Heart right ventricle (tissue), 16 donors: ENCODE measurements at regions of chr12 and their contacts with region 1.

Region 1: DNA sequence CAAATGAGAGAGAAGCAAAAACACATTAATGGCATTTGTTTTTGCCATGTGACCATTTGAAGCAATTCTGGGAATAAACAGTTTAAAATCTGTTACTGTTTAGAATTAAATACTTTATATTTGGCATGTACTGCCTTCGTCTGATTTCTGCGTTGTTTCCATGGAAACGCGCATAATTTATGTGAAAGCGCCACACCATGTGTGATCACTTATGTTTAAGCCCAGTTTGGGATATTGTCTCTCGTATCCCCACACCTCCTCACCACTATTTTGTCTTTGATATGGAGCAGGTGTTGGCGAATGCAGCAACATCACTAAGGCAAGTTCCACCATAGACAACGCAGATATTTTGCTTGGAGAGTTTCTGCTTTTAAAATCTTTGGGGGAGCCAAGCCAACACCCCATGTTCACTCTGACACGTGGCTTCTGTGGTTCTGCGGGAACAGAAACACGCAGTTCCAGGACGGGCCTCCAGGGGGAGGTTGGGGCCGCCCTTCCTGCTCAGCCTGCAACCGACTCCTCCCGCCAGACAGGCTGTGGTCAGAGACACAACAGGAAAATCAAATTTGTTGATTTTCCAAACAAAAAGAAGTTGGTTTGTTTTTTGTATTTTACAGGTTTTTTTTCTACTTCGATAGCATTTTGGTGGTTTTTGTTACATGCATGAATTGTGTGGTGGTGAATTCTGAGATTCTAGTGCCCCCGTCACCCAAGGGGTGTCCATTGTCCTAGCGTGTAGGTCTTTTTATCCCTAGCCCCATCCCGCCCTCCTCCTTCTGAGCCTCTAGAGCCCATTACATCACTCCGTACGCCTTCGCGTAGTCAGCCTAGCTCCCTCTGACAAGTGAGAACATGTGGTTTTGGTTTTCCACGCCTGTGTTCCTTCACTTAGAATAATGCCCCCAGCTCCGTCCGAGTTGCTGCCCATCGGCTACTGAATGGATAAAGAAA is 101.9 kb upstream of the SFSWAP start:
- DNase-seq: peak; percentile 71 to 75
- ATAC-seq: peak; percentile 71 to 93 (median 88)
- H3K4me3 ChIP-seq: peak overlapping the region in 3 of 10 donors; percentile 2 to 13 (median 10)
- H3K27ac ChIP-seq: no peak overlapping the region
- H3K4me1 ChIP-seq: peaks cover 0 to 45% (median 0%) of the 10 kb centered on the region in 9 donors
- H3K27me3 ChIP-seq: peaks cover 0 to 53% (median 14%) of the 10 kb centered on the region in 7 donors
- CTCF ChIP-seq: peak; percentile 70 to 93 (median 84)

Region 2: DNA sequence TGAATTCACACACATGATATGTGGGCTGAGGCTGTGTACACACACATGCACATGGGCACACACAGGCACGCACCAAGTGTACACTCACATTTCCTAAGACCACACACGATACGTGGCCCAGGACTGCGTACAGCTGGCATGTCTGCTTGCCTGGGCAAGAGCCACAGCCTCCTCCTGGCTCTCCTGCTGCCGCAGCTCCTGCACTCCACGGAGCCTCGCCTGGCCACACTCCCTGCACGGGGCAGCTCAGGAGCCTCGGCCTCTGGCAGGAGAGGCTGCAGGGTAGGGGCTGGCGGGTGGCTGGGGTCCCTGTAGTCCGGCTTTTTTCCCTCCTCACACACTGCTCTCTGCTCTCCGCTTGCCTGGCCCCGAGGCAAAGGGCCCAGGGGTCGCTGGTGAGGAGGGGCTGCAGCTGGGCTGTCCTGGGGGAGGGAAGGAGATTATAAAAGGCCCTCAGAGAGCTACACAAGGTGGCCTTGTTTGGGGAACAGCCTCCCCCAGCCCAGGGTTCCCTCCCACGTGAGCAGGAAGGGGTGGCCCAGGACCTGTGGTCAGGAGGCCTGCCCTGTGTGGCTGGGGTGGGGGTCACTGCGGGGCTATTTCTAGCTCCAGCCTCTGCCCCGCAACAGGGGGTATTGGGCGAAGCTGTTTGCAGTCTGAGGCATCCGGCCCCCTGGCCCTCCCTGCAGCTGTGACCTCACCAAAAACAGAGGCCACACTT is 12.8 kb after region 1 on chr12:
- intact Hi-C with region 1: no loop called
- DNase-seq: no peak
- ATAC-seq: peak in 4 of 8 donors; percentile 17 to 39 (median 24)
- H3K4me3 ChIP-seq: no peak overlapping the region
- H3K27ac ChIP-seq: no peak overlapping the region
- H3K4me1 ChIP-seq: peaks cover 0 to 16% (median 7%) of the 10 kb centered on the region in 9 donors
- H3K27me3 ChIP-seq: peaks cover 0 to 70% (median 54%) of the 10 kb centered on the region in 7 donors
- CTCF ChIP-seq: no peak

Region 3: DNA sequence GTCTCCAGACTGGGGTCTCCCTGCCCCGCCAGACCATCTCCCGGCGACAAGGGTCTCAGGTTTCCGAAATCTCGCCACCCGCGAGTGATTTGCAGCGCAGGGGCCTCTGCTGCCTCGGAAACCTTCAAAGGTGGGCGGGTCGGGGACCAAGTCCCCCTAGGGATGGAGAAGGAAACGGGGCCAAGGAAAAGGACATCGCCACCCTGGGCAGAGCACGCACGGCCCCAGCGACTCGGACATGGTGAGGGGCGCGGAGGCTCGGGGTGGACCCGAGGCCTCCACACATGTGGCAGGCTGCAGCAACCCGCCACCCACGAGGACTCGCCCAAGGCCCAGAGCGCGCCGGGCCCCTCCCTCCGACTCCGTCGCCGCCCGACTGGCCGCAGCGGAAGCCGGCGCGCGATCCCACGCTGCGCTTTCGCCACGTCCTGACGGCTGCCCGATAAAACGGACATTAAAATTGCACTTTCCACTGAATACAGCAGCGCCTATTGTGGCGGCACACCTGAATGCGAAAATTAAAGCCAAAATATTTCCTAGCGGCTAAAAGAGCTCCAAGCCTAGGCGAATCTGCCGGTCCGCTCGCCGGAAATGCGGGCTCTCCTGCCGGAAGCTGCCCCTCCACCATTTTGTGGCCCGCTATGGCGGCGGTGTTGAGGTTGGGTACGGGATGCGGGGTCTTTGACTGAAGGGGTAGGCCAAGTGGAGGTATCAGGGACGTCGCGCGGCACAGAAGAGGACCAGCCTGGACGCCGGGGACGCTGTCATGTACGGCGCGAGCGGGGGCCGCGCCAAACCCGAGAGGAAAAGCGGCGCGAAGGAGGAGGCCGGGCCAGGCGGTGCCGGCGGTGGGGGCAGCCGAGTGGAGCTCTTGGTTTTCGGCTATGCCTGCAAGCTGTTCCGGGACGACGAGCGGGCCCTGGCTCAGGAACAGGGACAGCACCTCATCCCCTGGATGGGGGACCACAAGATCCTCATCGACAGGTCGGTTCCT is 101.7 kb after region 1 on chr12 and contains the start of gene SFSWAP:
- intact Hi-C with region 1: loop called in 1 of 10 experiments (anchors 10 kb)
- DNase-seq: peak; percentile 74 to 76
- ATAC-seq: peak; percentile 96 to 98 (median 97)
- H3K4me3 ChIP-seq: peak within 1 kb of the TSS; percentile 57 to 100 (median 91)
- H3K27ac ChIP-seq: peak within 1 kb of the TSS; percentile 87 to 100 (median 96)
- H3K4me1 ChIP-seq: peaks cover 2 to 30% (median 23%) of the 10 kb centered on the region in 9 donors
- H3K27me3 ChIP-seq: no peaks in the 10 kb centered on the region
- CTCF ChIP-seq: no peak
- total RNA-seq, gene SFSWAP: 14.8 to 26.8 (median 19.6) TPM

Region 4: DNA sequence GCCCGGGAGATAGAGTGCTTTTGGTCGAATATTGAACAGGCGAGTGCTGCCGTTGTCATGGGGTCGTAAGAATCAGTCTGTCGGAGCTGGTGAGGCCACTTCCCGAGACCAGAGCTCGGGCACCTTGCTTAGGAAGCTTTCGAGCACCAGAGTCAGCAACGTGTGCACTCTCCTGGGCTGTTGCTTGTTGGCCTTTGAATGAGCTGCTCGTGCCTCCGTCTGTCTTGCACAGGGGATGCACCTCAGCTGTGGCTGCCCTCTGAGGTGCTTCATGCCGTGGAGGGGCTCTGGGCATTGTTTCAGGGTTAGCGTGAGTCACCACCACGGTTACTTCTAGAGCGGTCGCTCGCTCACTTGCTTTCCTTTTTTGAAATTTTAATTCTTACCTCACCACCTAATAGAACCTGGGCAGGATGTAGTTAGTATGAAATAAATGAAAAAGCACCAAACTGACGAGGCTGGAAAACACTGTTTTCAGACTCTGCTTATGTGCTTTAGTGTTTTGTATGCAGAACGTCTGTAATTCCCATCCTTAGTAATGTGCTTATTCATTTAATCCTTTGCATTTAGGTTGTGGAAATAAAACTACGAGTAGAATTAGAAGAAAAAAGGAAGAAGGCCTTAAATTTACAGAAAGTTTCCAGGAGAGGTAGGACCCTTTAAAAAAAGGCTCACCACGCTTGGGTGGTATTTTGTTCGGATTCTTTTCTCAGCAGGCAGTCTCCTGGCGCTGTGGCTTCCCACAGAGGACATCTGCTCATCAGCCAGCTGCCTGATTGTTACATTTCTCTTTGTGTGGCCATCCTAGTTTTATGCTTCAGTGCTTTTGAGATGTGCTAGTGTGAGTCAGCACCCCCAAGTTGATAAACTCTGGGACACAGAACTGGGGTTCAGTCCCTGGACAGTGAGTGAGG is 381.3 kb after region 1 on chr12:
- intact Hi-C with region 1: no loop called
- DNase-seq: no peak
- ATAC-seq: no peak
- H3K4me3 ChIP-seq: no peak overlapping the region
- H3K27ac ChIP-seq: no peak overlapping the region
- H3K4me1 ChIP-seq: peaks cover 0 to 12% (median 0%) of the 10 kb centered on the region in 9 donors
- H3K27me3 ChIP-seq: no peaks in the 10 kb centered on the region
- CTCF ChIP-seq: no peak